ENCODE measurements at regions of chr11 and their contacts with region 1.

Region 1: GRCh38 chr11:86802601-86803051 is 2.3 kb downstream of the PRSS23 start:
- DNase-seq: no peak
- ATAC-seq: peak; percentile 41
- H3K4me3 ChIP-seq: no peak overlapping the region
- H3K4me3 Mint-ChIP-seq: peak overlapping the region in 1 of 10 donors; percentile 40
- H3K27ac ChIP-seq: no peak overlapping the region
- H3K27ac Mint-ChIP-seq: no peak overlapping the region
- H3K4me1 ChIP-seq: peaks cover 0 to 25% of the 10 kb centered on the region in 2 donors
- H3K4me1 Mint-ChIP-seq: peaks cover 0 to 59% (median 9%) of the 10 kb centered on the region in 7 donors
- H3K27me3 ChIP-seq: peaks cover 0 to 4% of the 10 kb centered on the region in 2 donors
- H3K27me3 Mint-ChIP-seq: peaks cover 28 to 56% (median 53%) of the 10 kb centered on the region in 5 donors

Region 2: DNA sequence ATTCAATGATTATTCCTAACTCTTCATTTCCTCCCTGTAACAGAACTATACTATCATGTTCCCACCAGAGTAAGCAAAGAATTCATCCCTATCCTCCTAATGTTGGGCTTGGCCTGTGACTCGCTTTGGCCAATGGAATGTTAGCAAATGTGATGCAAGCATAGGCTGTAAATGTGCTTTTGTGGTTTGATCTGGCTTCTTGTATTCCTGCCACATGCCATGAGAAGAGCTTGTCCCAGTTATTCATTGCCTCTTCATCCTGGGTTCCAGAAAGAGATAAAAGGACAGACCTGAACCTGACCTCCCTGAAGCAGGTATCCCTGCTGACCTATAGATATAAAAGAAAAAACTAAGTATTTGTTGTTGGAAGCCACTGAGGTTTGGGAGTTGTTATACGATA is 1042.7 kb before region 1 on chr11:
- CTCF ChIA-PET with region 1: no interaction called
- POLR2A ChIA-PET with region 1: no interaction called
- intact Hi-C with region 1: loop called in 1 of 2 experiments (anchors 10 kb)
- DNase-seq: no peak
- ATAC-seq: no peak
- H3K4me3 ChIP-seq: no peak overlapping the region
- H3K4me3 Mint-ChIP-seq: peak overlapping the region in 3 of 10 donors; percentile 2 to 18 (median 4)
- H3K27ac ChIP-seq: no peak overlapping the region
- H3K27ac Mint-ChIP-seq: peak overlapping the region in 2 of 9 donors; percentile 0 to 23
- H3K4me1 ChIP-seq: peaks cover 49 to 51% of the 10 kb centered on the region in 2 donors
- H3K4me1 Mint-ChIP-seq: peaks cover 40 to 92% (median 73%) of the 10 kb centered on the region in 7 donors
- H3K27me3 ChIP-seq: no peaks in the 10 kb centered on the region
- H3K27me3 Mint-ChIP-seq: no peaks in the 10 kb centered on the region

Region 3: GRCh38 chr11:86592659-86593451 is 209.8 kb before region 1 on chr11:
- CTCF ChIA-PET with region 1: no interaction called
- POLR2A ChIA-PET with region 1: no interaction called
- intact Hi-C with region 1: loop called in 1 of 2 experiments (anchors 5 kb)
- DNase-seq: peak in 7 of 9 donors; percentile 25 to 77 (median 37)
- ATAC-seq: peak; percentile 78
- H3K4me3 ChIP-seq: no peak overlapping the region
- H3K4me3 Mint-ChIP-seq: peak overlapping the region in 3 of 10 donors; percentile 10 to 35 (median 23)
- H3K27ac ChIP-seq: no peak overlapping the region
- H3K27ac Mint-ChIP-seq: peak overlapping the region in 2 of 9 donors; percentile 32 to 58
- H3K4me1 ChIP-seq: peaks cover 0 to 7% of the 10 kb centered on the region in 2 donors
- H3K4me1 Mint-ChIP-seq: peaks cover 7 to 21% (median 14%) of the 10 kb centered on the region in 7 donors
- H3K27me3 ChIP-seq: no peaks in the 10 kb centered on the region
- H3K27me3 Mint-ChIP-seq: no peaks in the 10 kb centered on the region

Region 4: DNA sequence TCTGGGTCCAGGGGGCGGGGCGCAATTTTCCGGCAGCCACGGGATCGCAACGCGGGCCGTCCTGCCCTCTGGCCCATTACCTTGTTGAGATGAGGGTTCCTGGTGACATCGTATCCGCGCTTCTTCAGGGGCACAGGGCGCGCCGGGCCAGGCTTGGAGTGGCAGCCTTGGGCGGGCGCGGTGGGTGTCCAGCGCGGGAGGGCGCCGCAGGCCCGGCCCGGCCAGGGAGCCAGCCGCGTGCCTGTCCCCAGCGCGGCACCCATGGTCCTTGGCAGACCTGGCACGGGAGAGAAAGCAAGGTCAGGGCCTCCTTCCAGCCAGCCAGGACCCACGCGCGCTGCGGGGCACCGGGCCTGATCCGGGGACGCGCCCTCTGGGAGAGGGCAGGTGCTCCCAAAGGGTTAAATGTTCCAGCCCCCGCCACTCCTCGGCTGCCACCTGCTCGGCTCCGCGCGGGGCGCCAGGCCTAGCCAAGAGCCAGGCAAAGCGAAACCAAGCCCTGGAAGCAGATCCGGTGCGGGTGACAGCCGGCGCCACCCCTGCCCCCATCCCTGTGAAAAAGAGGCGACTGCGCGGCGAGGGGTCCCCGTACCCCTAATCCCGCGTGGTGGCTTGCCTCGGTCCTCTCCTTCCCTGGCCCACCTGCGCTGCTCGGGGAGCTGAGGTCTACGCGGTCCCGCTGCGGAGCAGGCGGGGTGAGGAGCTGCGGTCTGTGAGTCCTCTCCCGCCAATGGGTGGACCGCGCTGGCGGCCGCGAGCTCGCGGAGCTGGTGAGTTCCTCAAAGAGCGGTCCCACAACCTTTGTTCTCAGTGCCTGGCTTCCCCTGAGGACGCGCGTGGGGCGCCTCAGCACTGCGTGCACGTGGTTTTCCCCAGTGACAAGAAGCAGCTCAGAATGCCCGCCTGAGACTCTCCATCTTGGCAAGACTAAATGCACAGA is 130.7 kb before region 1 on chr11 and contains the start of gene ME3:
- CTCF ChIA-PET with region 1: no interaction called
- POLR2A ChIA-PET with region 1: no interaction called
- intact Hi-C with region 1: loop called in 1 of 2 experiments (anchors 5 kb)
- DNase-seq: peak; percentile 35 to 69 (median 54)
- ATAC-seq: peak; percentile 88
- H3K4me3 ChIP-seq: peak within 1 kb of the TSS; percentile 68
- H3K4me3 Mint-ChIP-seq: peak within 1 kb of the TSS; percentile 62 to 89 (median 84)
- H3K27ac ChIP-seq: peak within 1 kb of the TSS; percentile 54
- H3K27ac Mint-ChIP-seq: peak within 1 kb of the TSS in 7 of 9 donors; percentile 17 to 80 (median 62)
- H3K4me1 ChIP-seq: no peaks in the 10 kb centered on the region
- H3K4me1 Mint-ChIP-seq: peaks cover 10 to 29% (median 16%) of the 10 kb centered on the region in 7 donors
- H3K27me3 ChIP-seq: no peaks in the 10 kb centered on the region
- H3K27me3 Mint-ChIP-seq: peaks cover 5 to 39% (median 10%) of the 10 kb centered on the region in 5 donors
- total RNA-seq, gene ME3: 2.2 to 13.7 (median 7.0) TPM